Dendritic cell treated with granulocyte-macrophage colony-stimulating factor and Interleukin-4, amounts not matched to agents 40 ng/mL and 50 ng/mL, for 4 days (primary cell): ENCODE measurements at regions of chr9 and their contacts with region 1.

Region 1: DNA sequence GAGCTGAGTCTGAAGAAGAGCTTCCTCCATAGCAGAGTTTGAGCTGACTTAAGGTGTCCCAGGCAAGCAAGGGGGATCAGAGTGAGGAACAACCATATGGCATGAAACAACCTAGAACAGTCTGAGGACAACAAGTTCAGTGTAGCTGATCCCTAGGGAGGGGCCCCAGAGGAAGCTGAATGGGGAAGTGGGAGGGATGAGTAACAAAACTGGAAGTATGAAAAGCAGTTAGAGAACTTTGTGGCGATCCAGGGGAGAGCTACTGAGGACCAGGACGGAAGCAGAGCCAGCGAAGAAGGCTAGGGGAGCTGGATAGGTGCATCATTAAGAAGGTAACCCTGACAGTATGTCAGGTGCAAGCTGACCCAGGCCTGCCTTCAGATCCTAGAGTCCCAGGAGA is 580.8 kb downstream of the BNC2 start:
- H3K4me3 Mint-ChIP-seq: peak overlapping the region; percentile 39
- H3K27ac Mint-ChIP-seq: peak overlapping the region; percentile 75
- H3K4me1 Mint-ChIP-seq: peaks cover 34% of the 10 kb centered on the region
- H3K27me3 Mint-ChIP-seq: peaks cover 7% of the 10 kb centered on the region

Region 2: DNA sequence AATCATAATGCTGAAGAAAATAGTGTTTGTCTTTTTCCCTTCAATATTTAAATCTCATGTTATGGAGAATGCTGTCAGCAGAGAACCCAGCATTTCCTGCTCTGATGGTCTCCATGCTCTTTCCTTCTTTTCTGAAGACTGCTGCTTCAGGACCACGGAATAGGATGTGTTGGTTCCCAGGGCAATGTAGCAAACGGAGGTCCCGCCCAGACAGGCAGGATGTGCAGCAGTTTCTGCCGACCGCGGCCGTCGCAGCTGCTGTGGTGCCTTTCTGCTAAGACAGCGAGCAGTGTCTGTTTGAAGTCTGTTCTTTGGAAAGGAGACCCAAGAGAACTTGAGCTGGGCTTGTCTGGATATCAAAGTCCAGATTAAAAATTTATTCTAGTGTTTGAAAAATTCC is 82.5 kb before region 1 on chr9:
- intact Hi-C with region 1: no loop called
- H3K4me3 Mint-ChIP-seq: no peak overlapping the region
- H3K27ac Mint-ChIP-seq: no peak overlapping the region
- H3K4me1 Mint-ChIP-seq: no peaks in the 10 kb centered on the region
- H3K27me3 Mint-ChIP-seq: peaks cover 2% of the 10 kb centered on the region

Region 3: DNA sequence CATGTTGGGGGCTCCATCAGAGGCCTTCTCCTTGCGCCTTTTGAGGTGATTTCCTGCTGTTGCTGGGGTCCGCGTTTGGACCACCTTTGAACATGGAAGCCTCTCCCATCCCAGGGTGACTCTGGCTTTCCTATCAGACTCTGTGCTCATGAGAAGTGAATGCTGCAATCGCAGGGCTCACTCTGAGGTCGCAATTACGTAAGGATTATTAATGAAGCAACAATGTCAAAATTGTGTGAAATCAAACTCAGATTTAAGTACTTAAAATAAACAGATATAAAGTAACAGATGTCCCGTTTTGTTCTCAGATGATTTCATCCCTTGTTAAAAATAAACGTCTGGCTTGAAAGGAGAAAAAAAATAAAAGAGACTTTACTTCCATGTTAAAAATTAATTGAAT is 53.3 kb before region 1 on chr9:
- intact Hi-C with region 1: no loop called
- H3K4me3 Mint-ChIP-seq: no peak overlapping the region
- H3K27ac Mint-ChIP-seq: no peak overlapping the region
- H3K4me1 Mint-ChIP-seq: peaks cover 13% of the 10 kb centered on the region
- H3K27me3 Mint-ChIP-seq: no peaks in the 10 kb centered on the region

Region 4: DNA sequence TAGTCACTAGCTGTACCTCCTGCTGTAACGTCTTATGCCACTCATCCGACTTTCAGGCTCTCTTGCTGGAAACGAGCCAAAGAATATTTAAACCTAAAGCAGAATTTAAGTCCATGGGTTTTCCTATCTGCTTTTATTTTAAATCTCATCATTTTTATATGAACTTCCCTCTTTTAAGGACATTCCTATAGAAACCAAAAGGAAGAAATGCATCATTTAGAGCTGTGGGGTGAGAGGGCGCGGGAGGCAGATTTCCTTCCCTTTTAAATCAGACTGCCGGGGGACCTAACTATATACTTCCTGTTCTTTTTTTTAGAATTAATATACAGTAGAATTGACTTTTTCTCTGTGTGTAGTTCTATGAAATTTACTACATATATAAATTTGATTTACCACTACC is 112.1 kb after region 1 on chr9:
- intact Hi-C with region 1: loop called (anchors 5 kb)
- H3K4me3 Mint-ChIP-seq: no peak overlapping the region
- H3K27ac Mint-ChIP-seq: no peak overlapping the region
- H3K4me1 Mint-ChIP-seq: peaks cover 47% of the 10 kb centered on the region
- H3K27me3 Mint-ChIP-seq: peaks cover 2% of the 10 kb centered on the region